PC-3 (cell line): ENCODE measurements at regions of chrX and their contacts with region 1.

Region 1: GRCh38 chrX:116204932-116205331 is 34.4 kb downstream of the AGTR2 start:
- DNase-seq: peak; percentile 65
- ATAC-seq: peak; percentile 45; the same call in 1 of the 2 replicates
- H3K4me3 ChIP-seq: no peak overlapping the region
- H3K27ac ChIP-seq: peak overlapping the region; percentile 19
- H3K4me1 ChIP-seq: peaks cover 7% of the 10 kb centered on the region
- H3K27me3 ChIP-seq: no peaks in the 10 kb centered on the region
- CTCF ChIP-seq: peak; percentile 83

Region 2: DNA sequence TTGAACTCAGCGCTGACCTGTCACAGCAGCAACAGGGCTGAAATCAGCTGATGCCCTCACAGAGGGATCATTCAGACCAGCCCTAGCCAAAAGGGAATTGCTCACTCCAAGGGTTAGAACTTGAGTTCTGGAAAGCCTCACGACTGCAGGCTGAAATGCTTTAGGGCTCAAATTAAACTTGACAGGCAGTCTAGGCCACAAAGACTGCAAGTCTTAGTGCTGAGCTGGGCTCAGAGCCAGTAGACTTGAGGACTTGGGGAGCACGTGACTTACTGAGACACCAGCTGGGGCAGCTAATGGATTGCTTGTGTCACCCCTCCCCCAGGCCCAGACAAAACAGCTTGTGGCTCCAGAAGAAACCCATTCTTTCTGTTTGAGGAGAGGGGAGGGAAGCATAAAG is 112.5 kb after region 1 on chrX:
- CTCF ChIA-PET with region 1: no interaction called
- POLR2A ChIA-PET with region 1: no interaction called
- intact Hi-C with region 1: loop called (anchors 1 kb)
- DNase-seq: no peak
- ATAC-seq: no peak
- H3K4me3 ChIP-seq: no peak overlapping the region
- H3K27ac ChIP-seq: peak overlapping the region; percentile 99
- H3K4me1 ChIP-seq: peaks cover 18% of the 10 kb centered on the region
- H3K27me3 ChIP-seq: no peaks in the 10 kb centered on the region
- CTCF ChIP-seq: no peak

Region 3: GRCh38 chrX:116357329-116357728 is 152.4 kb after region 1 on chrX:
- CTCF ChIA-PET with region 1: no interaction called
- POLR2A ChIA-PET with region 1: no interaction called
- intact Hi-C with region 1: loop called (anchors 1 kb)
- DNase-seq: no peak
- ATAC-seq: no peak
- H3K4me3 ChIP-seq: no peak overlapping the region
- H3K27ac ChIP-seq: no peak overlapping the region
- H3K4me1 ChIP-seq: no peaks in the 10 kb centered on the region; the same call in 1 of the 2 replicates
- H3K27me3 ChIP-seq: no peaks in the 10 kb centered on the region
- CTCF ChIP-seq: no peak

Region 4: GRCh38 chrX:116399681-116400080 is 194.7 kb after region 1 on chrX:
- CTCF ChIA-PET with region 1: no interaction called
- POLR2A ChIA-PET with region 1: no interaction called
- intact Hi-C with region 1: no loop called
- DNase-seq: no peak
- ATAC-seq: no peak
- H3K4me3 ChIP-seq: no peak overlapping the region
- H3K27ac ChIP-seq: no peak overlapping the region
- H3K4me1 ChIP-seq: no peaks in the 10 kb centered on the region
- H3K27me3 ChIP-seq: no peaks in the 10 kb centered on the region
- CTCF ChIP-seq: no peak

Region 5: DNA sequence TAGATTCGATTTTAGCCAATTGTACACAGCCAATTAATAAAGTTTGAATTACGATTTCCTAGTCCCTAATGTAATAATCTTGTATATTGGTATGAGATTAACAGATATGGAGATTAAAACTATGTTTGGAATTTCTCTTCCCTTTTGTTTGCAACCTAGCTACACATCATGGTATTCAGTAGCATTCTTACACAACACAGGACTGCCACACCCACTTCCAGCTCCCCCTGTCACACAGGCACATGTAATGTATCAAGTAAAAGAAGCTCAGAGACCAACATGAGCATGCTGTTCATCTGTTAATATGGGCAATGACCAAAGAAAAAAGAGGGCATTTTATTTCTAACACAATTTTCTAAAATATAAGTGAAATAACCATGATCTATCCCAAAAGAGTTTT is 244.2 kb after region 1 on chrX:
- CTCF ChIA-PET with region 1: no interaction called
- POLR2A ChIA-PET with region 1: no interaction called
- intact Hi-C with region 1: loop called (anchors 1 kb)
- DNase-seq: peak; percentile 44
- ATAC-seq: no peak
- H3K4me3 ChIP-seq: no peak overlapping the region
- H3K27ac ChIP-seq: no peak overlapping the region
- H3K4me1 ChIP-seq: no peaks in the 10 kb centered on the region
- H3K27me3 ChIP-seq: no peaks in the 10 kb centered on the region
- CTCF ChIP-seq: no peak